ENCODE measurements at regions of chr4 and their contacts with region 1.

Region 1: DNA sequence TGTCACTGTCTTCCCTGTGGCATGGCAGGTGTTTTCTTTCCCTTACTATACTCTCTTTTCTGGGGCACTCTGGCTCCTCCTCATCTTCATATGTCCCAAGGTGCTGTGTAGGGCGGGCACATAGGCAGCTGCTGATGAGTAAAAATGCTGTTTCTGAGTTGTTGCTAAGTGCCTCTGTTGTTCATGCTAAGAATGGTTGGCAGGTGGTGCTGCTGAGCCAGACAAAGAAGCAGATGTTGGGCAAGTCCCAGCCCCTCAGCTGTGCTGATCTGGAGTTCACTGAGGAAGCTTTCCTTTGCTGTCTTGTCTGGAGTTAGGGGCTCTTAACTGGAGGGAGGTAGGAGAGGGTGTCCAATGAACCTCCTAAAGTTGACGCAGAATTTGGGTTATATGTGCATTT is 40.6 kb downstream of the HADH start:
- DNase-seq: peak; percentile 52 to 88 (median 70)
- ATAC-seq: peak; percentile 87
- H3K4me3 ChIP-seq: no peak overlapping the region
- H3K4me3 Mint-ChIP-seq: peak overlapping the region; percentile 64
- H3K27ac ChIP-seq: peak overlapping the region in 1 of 2 donors; percentile 42
- H3K27ac Mint-ChIP-seq: peak overlapping the region; percentile 81
- H3K4me1 ChIP-seq: peaks cover 37% of the 10 kb centered on the region
- H3K4me1 Mint-ChIP-seq: peaks cover 67% of the 10 kb centered on the region
- H3K27me3 ChIP-seq: no peaks in the 10 kb centered on the region
- H3K27me3 Mint-ChIP-seq: no peaks in the 10 kb centered on the region
- CTCF ChIP-seq: peak; percentile 69

Region 2: GRCh38 chr4:107838861-107839565 is 191.3 kb before region 1 on chr4:
- CTCF ChIA-PET with region 1: no interaction called
- POLR2A ChIA-PET with region 1: no interaction called
- intact Hi-C with region 1: no loop called
- DNase-seq: peak in 2 of 14 experiments; percentile 22 to 24
- ATAC-seq: no peak
- H3K4me3 ChIP-seq: no peak overlapping the region
- H3K4me3 Mint-ChIP-seq: no peak overlapping the region
- H3K27ac ChIP-seq: no peak overlapping the region
- H3K27ac Mint-ChIP-seq: no peak overlapping the region
- H3K4me1 ChIP-seq: no peaks in the 10 kb centered on the region
- H3K4me1 Mint-ChIP-seq: no peaks in the 10 kb centered on the region
- H3K27me3 ChIP-seq: peaks cover 0 to 3% of the 10 kb centered on the region in 2 experiments
- H3K27me3 Mint-ChIP-seq: peaks cover 7% of the 10 kb centered on the region
- CTCF ChIP-seq: no peak

Region 3: GRCh38 chr4:108053251-108053711 is 22.9 kb after region 1 on chr4:
- CTCF ChIA-PET with region 1: interaction called, 26 read pairs
- POLR2A ChIA-PET with region 1: interaction called, 21 read pairs
- intact Hi-C with region 1: loop called in 1 of 2 experiments (anchors 1 kb)
- DNase-seq: no peak
- ATAC-seq: no peak
- H3K4me3 ChIP-seq: no peak overlapping the region
- H3K4me3 Mint-ChIP-seq: peak overlapping the region; percentile 57
- H3K27ac ChIP-seq: peak overlapping the region in 1 of 2 donors; percentile 61
- H3K27ac Mint-ChIP-seq: peak overlapping the region; percentile 93
- H3K4me1 ChIP-seq: peaks cover 69% of the 10 kb centered on the region
- H3K4me1 Mint-ChIP-seq: peaks cover 97% of the 10 kb centered on the region
- H3K27me3 ChIP-seq: no peaks in the 10 kb centered on the region
- H3K27me3 Mint-ChIP-seq: no peaks in the 10 kb centered on the region
- CTCF ChIP-seq: no peak

Region 4: DNA sequence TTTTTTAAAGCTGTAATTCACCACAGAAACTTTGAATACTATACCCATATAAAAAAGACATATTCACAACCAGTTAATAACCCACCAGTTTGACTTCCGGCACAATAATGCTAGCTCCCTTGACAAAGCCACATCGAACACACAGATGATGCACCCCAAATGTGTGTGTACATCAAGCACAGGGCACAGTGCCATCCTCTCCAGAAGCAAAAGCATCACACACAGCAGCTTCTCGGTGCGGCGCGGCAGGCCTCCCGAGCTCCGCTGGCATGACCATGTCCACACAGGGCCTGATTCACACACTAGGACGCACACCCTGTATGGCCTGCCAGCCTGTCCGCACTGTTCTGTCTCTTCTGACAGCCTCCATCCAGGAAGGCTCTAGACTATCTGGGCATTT is 50.4 kb after region 1 on chr4:
- CTCF ChIA-PET with region 1: interaction called, 7 read pairs
- POLR2A ChIA-PET with region 1: interaction called, 13 read pairs
- intact Hi-C with region 1: loop called in 1 of 2 experiments (anchors 2 kb)
- DNase-seq: peak; percentile 35 to 77 (median 62)
- ATAC-seq: peak; percentile 84
- H3K4me3 ChIP-seq: no peak overlapping the region
- H3K4me3 Mint-ChIP-seq: peak overlapping the region; percentile 77
- H3K27ac ChIP-seq: peak overlapping the region in 1 of 2 donors; percentile 68
- H3K27ac Mint-ChIP-seq: peak overlapping the region; percentile 95
- H3K4me1 ChIP-seq: peaks cover 14% of the 10 kb centered on the region
- H3K4me1 Mint-ChIP-seq: peaks cover 78% of the 10 kb centered on the region
- H3K27me3 ChIP-seq: no peaks in the 10 kb centered on the region
- H3K27me3 Mint-ChIP-seq: no peaks in the 10 kb centered on the region
- CTCF ChIP-seq: no peak

Region 5: GRCh38 chr4:108118490-108118889 is 88.2 kb after region 1 on chr4:
- CTCF ChIA-PET with region 1: interaction called, 11 read pairs
- POLR2A ChIA-PET with region 1: interaction called, 11 read pairs
- intact Hi-C with region 1: no loop called
- DNase-seq: peak in 8 of 14 experiments; percentile 31 to 76 (median 50)
- ATAC-seq: peak; percentile 61
- H3K4me3 ChIP-seq: no peak overlapping the region
- H3K4me3 Mint-ChIP-seq: peak overlapping the region; percentile 72
- H3K27ac ChIP-seq: peak overlapping the region; percentile 58 to 89
- H3K27ac Mint-ChIP-seq: peak overlapping the region; percentile 92
- H3K4me1 ChIP-seq: peaks cover 49% of the 10 kb centered on the region
- H3K4me1 Mint-ChIP-seq: peaks cover 95% of the 10 kb centered on the region
- H3K27me3 ChIP-seq: no peaks in the 10 kb centered on the region
- H3K27me3 Mint-ChIP-seq: no peaks in the 10 kb centered on the region
- CTCF ChIP-seq: no peak

Region 6: DNA sequence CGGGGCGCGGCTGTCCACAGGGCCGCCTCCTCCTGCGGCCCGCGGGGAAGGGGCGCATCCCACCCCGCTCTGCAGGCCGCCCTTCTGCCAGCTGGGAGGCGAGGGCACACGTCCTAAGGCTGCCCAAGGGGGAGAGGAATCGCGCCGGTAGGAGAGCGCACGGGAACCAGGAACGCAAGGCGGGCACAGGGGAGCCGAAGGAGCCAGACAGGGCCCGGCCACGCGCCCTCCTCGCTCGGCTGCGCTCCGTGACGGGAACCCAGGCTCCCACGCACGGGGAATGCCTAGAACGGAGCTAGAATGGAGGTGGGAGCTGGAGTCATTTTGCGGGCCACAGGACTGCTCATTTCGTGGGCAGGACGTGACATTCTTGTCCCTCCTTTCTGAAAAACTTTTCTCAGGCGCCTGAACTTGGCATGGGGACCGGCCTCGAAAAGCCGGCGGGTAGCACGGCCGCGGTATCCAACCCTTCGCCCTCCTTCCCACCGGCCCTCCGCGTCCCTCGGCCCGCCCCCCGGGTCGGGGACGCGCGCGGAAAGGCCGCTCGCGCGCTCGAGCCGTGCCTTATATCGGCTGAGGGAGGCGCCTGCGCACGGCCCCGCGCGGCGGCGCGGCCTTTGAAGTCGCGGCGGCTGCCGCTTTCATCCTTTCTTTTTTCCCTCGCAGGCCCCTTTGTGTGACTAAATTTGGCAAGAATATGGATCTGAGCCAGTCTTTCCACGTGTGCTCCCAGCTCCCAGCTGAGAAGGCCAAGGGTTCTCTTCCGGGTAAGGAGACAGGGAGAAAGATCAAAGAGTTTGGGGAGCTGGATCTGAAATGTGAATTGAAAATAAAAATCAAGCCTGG is 142.6 kb after region 1 on chr4:
- CTCF ChIA-PET with region 1: interaction called, 17 read pairs
- POLR2A ChIA-PET with region 1: interaction called, 15 read pairs
- intact Hi-C with region 1: loop called (anchors 2 to 5 kb)
- DNase-seq: peak; percentile 51 to 87 (median 70)
- ATAC-seq: peak; percentile 39
- H3K4me3 ChIP-seq: peak overlapping the region; percentile 85
- H3K4me3 Mint-ChIP-seq: peak overlapping the region; percentile 93
- H3K27ac ChIP-seq: peak overlapping the region; percentile 46 to 91
- H3K27ac Mint-ChIP-seq: peak overlapping the region; percentile 88
- H3K4me1 ChIP-seq: peaks cover 50% of the 10 kb centered on the region
- H3K4me1 Mint-ChIP-seq: peaks cover 67% of the 10 kb centered on the region
- H3K27me3 ChIP-seq: peaks cover 7 to 11% of the 10 kb centered on the region in 2 experiments
- H3K27me3 Mint-ChIP-seq: peaks cover 9% of the 10 kb centered on the region
- CTCF ChIP-seq: no peak

Region 7: DNA sequence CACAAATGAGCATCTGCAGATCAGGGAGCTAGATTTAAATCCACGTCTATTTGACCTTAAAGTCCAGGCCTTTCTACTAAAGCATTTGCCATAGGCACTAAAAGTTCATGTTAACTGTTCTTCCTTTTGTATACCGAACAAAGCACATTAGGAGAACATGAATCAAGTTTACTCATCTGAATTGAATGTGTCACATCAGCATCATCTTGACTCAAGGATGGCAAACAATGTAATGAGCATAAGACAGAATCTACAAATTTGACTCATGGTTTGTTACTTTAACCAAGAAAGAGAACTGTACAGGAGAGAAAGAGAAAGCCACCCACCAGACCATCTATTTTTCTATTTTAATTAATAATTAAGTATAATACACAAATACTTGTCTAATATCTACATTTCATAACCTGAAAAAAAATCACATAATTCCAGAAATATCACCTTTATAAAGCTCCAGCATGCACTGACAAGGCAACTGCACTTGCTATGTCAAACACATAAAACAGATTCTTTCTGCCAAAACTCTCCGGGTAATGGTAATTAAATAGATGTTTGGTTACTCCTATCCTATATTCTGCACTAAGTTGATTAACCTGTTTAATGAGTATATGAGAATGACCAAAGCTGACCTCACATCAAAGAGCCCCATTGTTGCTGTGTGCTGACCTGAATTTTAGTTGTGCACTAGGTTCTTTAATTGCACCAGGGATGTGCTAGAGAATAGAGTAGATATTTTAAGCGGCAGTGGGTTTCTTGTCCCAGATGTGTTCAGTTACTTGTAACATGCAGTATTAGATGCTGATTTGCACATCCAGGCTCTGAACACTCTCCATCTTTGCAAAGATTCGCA is 180.9 kb after region 1 on chr4:
- CTCF ChIA-PET with region 1: no interaction called
- POLR2A ChIA-PET with region 1: no interaction called
- intact Hi-C with region 1: no loop called
- DNase-seq: no peak
- ATAC-seq: no peak
- H3K4me3 ChIP-seq: no peak overlapping the region
- H3K4me3 Mint-ChIP-seq: no peak overlapping the region
- H3K27ac ChIP-seq: no peak overlapping the region
- H3K27ac Mint-ChIP-seq: no peak overlapping the region
- H3K4me1 ChIP-seq: no peaks in the 10 kb centered on the region
- H3K4me1 Mint-ChIP-seq: peaks cover 29% of the 10 kb centered on the region
- H3K27me3 ChIP-seq: no peaks in the 10 kb centered on the region
- H3K27me3 Mint-ChIP-seq: no peaks in the 10 kb centered on the region
- CTCF ChIP-seq: no peak

Region 8: GRCh38 chr4:108570993-108571569 is 540.7 kb after region 1 on chr4:
- CTCF ChIA-PET with region 1: interaction called, 27 read pairs
- POLR2A ChIA-PET with region 1: interaction called, 18 read pairs
- intact Hi-C with region 1: loop called in 1 of 2 experiments (anchors 1 kb)
- DNase-seq: no peak
- ATAC-seq: no peak
- H3K4me3 ChIP-seq: no peak overlapping the region
- H3K4me3 Mint-ChIP-seq: no peak overlapping the region
- H3K27ac ChIP-seq: no peak overlapping the region
- H3K27ac Mint-ChIP-seq: no peak overlapping the region
- H3K4me1 ChIP-seq: peaks cover 9% of the 10 kb centered on the region
- H3K4me1 Mint-ChIP-seq: peaks cover 33% of the 10 kb centered on the region
- H3K27me3 ChIP-seq: no peaks in the 10 kb centered on the region
- H3K27me3 Mint-ChIP-seq: no peaks in the 10 kb centered on the region
- CTCF ChIP-seq: no peak

Region 9: DNA sequence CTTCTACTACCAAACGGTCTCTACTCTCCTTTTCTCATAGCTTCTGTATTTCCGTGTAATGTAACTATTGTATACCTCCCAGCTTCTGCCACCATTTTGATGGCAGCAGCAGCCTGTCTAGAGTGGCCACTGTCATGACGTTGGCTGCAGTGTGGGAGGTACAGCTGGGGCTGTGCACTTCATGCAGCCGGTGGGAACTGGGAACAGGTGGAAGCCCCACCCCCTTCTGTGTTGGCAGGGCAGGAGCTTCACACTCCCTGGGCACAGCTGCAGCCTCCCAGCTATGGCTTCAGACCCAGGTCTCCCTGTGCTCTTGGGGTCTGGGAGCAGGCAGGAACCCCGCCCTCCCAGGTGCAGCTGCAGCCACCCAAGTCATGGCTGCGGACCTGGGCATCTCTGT is 1353.5 kb after region 1 on chr4:
- CTCF ChIA-PET with region 1: no interaction called
- POLR2A ChIA-PET with region 1: no interaction called
- intact Hi-C with region 1: no loop called
- DNase-seq: no peak
- ATAC-seq: no peak
- H3K4me3 ChIP-seq: no peak overlapping the region
- H3K4me3 Mint-ChIP-seq: no peak overlapping the region
- H3K27ac ChIP-seq: no peak overlapping the region
- H3K27ac Mint-ChIP-seq: no peak overlapping the region
- H3K4me1 ChIP-seq: no peaks in the 10 kb centered on the region
- H3K4me1 Mint-ChIP-seq: no peaks in the 10 kb centered on the region
- H3K27me3 ChIP-seq: no peaks in the 10 kb centered on the region
- H3K27me3 Mint-ChIP-seq: peaks cover 28% of the 10 kb centered on the region
- CTCF ChIP-seq: no peak